ENCODE measurements at regions of chr13 and their contacts with region 1.

Region 1: GRCh38 chr13:97030705-97031452 is 36.6 kb upstream of the OXGR1 start:
- DNase-seq: no peak
- ATAC-seq: no peak
- H3K4me3 ChIP-seq: no peak overlapping the region
- H3K27ac ChIP-seq: no peak overlapping the region
- H3K4me1 ChIP-seq: peaks cover 0 to 21% (median 0%) of the 10 kb centered on the region in 12 donors
- H3K27me3 ChIP-seq: no peaks in the 10 kb centered on the region
- CTCF ChIP-seq: peak in 6 of 12 donors; percentile 16 to 30 (median 24)
- POLR2A ChIP-seq: no peak

Region 2: GRCh38 chr13:96880419-96880818 is 150.5 kb before region 1 on chr13:
- intact Hi-C with region 1: no loop called
- DNase-seq: no peak
- ATAC-seq: no peak
- H3K4me3 ChIP-seq: no peak overlapping the region
- H3K27ac ChIP-seq: no peak overlapping the region
- H3K4me1 ChIP-seq: no peaks in the 10 kb centered on the region
- H3K27me3 ChIP-seq: no peaks in the 10 kb centered on the region
- CTCF ChIP-seq: no peak
- POLR2A ChIP-seq: no peak

Region 3: GRCh38 chr13:97194479-97194878 is 163.6 kb after region 1 on chr13:
- intact Hi-C with region 1: loop called in 1 of 10 experiments (anchors 10 kb)
- DNase-seq: no peak
- ATAC-seq: no peak
- H3K4me3 ChIP-seq: no peak overlapping the region
- H3K27ac ChIP-seq: no peak overlapping the region
- H3K4me1 ChIP-seq: peaks cover 0 to 7% (median 0%) of the 10 kb centered on the region in 12 donors
- H3K27me3 ChIP-seq: no peaks in the 10 kb centered on the region
- CTCF ChIP-seq: no peak
- POLR2A ChIP-seq: no peak

Region 4: GRCh38 chr13:97212601-97213040 is 181.7 kb after region 1 on chr13:
- intact Hi-C with region 1: loop called in 1 of 10 experiments (anchors 5 kb)
- DNase-seq: no peak
- ATAC-seq: peak in 3 of 4 donors; percentile 52 to 75 (median 72)
- H3K4me3 ChIP-seq: no peak overlapping the region
- H3K27ac ChIP-seq: no peak overlapping the region
- H3K4me1 ChIP-seq: peaks cover 0 to 21% (median 0%) of the 10 kb centered on the region in 12 donors
- H3K27me3 ChIP-seq: peaks cover 0 to 2% (median 0%) of the 10 kb centered on the region in 9 donors
- CTCF ChIP-seq: peak; percentile 28 to 57 (median 48)
- POLR2A ChIP-seq: no peak

Region 5: DNA sequence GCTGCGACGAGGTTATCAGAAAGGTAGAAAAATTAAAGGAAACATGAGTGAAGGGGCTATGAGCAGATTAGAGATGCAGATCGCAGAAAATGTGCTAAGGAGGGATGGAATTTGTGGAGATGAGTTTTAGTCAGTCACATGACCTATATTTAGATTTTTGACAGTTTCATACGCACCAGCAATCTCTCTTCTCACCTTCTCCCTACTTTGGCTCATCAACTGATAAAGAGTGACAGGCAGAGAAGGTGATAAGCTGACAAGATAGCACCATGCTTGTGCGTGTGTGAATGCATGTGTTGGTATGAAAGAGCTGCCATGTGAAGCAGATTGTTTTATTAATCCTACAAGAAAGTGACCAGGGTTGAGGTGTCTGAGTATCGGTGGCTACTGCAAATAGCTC is 655.7 kb after region 1 on chr13:
- intact Hi-C with region 1: no loop called
- DNase-seq: no peak
- ATAC-seq: no peak
- H3K4me3 ChIP-seq: no peak overlapping the region
- H3K27ac ChIP-seq: no peak overlapping the region
- H3K4me1 ChIP-seq: no peaks in the 10 kb centered on the region
- H3K27me3 ChIP-seq: peaks cover 0 to 5% (median 0%) of the 10 kb centered on the region in 9 donors
- CTCF ChIP-seq: no peak
- POLR2A ChIP-seq: no peak

Region 6: GRCh38 chr13:97810152-97810551 is 779.3 kb after region 1 on chr13:
- intact Hi-C with region 1: loop called in 1 of 10 experiments (anchors 10 kb)
- DNase-seq: no peak
- ATAC-seq: no peak
- H3K4me3 ChIP-seq: no peak overlapping the region
- H3K27ac ChIP-seq: no peak overlapping the region
- H3K4me1 ChIP-seq: no peaks in the 10 kb centered on the region
- H3K27me3 ChIP-seq: no peaks in the 10 kb centered on the region
- CTCF ChIP-seq: peak in 10 of 12 donors; percentile 15 to 54 (median 34)
- POLR2A ChIP-seq: no peak

Measured in heart left ventricle (tissue), 16 donors.